ENCODE measurements at regions of chrX and their contacts with region 1.

Region 1: DNA sequence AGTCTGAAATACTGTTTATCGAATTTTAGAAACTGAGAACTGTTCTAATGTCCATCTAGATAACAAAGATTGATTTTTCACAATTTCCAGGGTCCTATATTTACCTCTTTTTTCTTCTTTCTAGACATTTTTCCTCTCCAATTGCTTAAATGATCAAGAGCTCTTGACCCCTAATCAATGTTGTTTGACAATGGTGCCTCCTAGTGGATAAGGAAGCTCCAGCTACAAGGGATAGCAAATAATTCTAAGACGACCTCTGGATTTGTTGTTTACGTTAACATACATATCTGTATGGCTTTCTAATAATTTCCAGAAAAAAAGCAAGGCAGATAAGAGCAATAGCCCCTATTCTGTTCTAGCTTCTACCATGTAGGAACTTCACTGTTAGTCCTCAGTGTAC is 35.8 kb downstream of the GPR82 start:
- DNase-seq: peak in 2 of 9 experiments; percentile 39 to 54
- ATAC-seq: no peak
- H3K4me3 ChIP-seq: no peak overlapping the region
- H3K4me3 Mint-ChIP-seq: no peak overlapping the region
- H3K27ac ChIP-seq: no peak overlapping the region
- H3K27ac Mint-ChIP-seq: no peak overlapping the region
- H3K4me1 ChIP-seq: no peaks in the 10 kb centered on the region
- H3K4me1 Mint-ChIP-seq: peaks cover 26% of the 10 kb centered on the region
- H3K27me3 ChIP-seq: no peaks in the 10 kb centered on the region
- H3K27me3 Mint-ChIP-seq: no peaks in the 10 kb centered on the region
- CTCF ChIP-seq: peak; percentile 36

Region 2: DNA sequence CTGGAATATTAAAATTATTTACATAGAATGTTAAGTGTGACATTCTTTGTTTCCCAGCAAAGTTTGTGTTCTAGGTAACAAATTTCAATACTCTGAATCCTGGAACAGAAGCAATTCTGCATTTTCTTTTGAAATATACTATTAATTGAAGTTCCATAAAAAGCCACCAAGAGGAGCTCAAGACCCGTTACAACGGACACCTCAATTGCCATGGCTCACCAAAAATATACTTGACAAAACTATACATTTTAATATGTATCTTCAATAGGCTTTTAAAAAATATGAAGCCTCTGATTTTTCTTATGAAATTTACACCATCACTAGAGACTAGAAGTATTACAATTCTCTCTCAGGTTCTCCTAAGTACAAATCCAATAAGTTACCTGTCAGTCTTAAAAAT is 201.3 kb before region 1 on chrX:
- CTCF ChIA-PET with region 1: no interaction called
- POLR2A ChIA-PET with region 1: no interaction called
- intact Hi-C with region 1: loop called in 1 of 2 experiments (anchors 1 kb)
- DNase-seq: peak in 2 of 9 experiments; percentile 35 to 50
- ATAC-seq: no peak
- H3K4me3 ChIP-seq: no peak overlapping the region
- H3K4me3 Mint-ChIP-seq: no peak overlapping the region
- H3K27ac ChIP-seq: no peak overlapping the region
- H3K27ac Mint-ChIP-seq: no peak overlapping the region
- H3K4me1 ChIP-seq: peaks cover 28% of the 10 kb centered on the region
- H3K4me1 Mint-ChIP-seq: peaks cover 48% of the 10 kb centered on the region
- H3K27me3 ChIP-seq: no peaks in the 10 kb centered on the region
- H3K27me3 Mint-ChIP-seq: no peaks in the 10 kb centered on the region
- CTCF ChIP-seq: no peak

Region 3: GRCh38 chrX:41781502-41781901 is 21.7 kb after region 1 on chrX:
- CTCF ChIA-PET with region 1: no interaction called
- POLR2A ChIA-PET with region 1: no interaction called
- intact Hi-C with region 1: no loop called
- DNase-seq: peak in 3 of 9 experiments; percentile 6 to 63 (median 51)
- ATAC-seq: peak; percentile 54
- H3K4me3 ChIP-seq: no peak overlapping the region
- H3K4me3 Mint-ChIP-seq: no peak overlapping the region
- H3K27ac ChIP-seq: no peak overlapping the region
- H3K27ac Mint-ChIP-seq: no peak overlapping the region
- H3K4me1 ChIP-seq: no peaks in the 10 kb centered on the region
- H3K4me1 Mint-ChIP-seq: peaks cover 15% of the 10 kb centered on the region
- H3K27me3 ChIP-seq: no peaks in the 10 kb centered on the region
- H3K27me3 Mint-ChIP-seq: no peaks in the 10 kb centered on the region
- CTCF ChIP-seq: peak; percentile 68

Region 4: DNA sequence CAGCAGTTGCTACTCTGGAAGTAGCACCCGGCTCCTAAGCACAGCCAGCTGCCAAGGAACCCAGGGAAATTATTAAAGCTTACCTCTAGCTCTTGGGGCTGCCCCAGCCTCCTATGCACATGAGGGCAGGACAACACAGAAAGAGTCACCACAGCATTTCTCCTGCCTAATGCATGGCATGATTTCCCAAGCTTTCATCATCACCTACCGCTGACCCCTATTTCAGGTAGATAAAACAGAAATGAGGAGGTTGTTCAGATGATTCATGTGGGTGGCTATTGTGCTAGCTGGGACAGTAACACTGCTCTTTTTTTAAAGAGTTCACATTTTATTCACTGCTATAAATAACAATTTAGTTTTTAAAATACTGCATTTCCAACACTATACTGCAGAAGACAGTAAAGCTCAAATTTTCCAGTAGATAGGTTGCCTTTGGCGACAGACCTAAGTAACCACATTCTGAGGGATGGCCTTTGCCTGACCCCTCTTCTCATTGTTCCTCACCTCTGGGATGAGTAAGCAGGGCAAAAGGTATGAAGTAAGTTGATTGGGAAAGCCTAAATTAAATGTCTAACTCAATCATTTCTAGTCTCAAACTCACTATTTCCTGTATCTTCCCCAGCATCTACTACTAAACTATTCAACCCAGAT is 146.8 kb after region 1 on chrX:
- CTCF ChIA-PET with region 1: no interaction called
- POLR2A ChIA-PET with region 1: no interaction called
- intact Hi-C with region 1: no loop called
- DNase-seq: no peak
- ATAC-seq: peak; percentile 17
- H3K4me3 ChIP-seq: no peak overlapping the region
- H3K4me3 Mint-ChIP-seq: no peak overlapping the region
- H3K27ac ChIP-seq: no peak overlapping the region
- H3K27ac Mint-ChIP-seq: peak overlapping the region; percentile 32
- H3K4me1 ChIP-seq: peaks cover 22% of the 10 kb centered on the region
- H3K4me1 Mint-ChIP-seq: peaks cover 59% of the 10 kb centered on the region
- H3K27me3 ChIP-seq: no peaks in the 10 kb centered on the region
- H3K27me3 Mint-ChIP-seq: no peaks in the 10 kb centered on the region
- CTCF ChIP-seq: no peak